Heart left ventricle (tissue), 16 donors: ENCODE measurements at regions of chr5 and their contacts with region 1.

Region 1: DNA sequence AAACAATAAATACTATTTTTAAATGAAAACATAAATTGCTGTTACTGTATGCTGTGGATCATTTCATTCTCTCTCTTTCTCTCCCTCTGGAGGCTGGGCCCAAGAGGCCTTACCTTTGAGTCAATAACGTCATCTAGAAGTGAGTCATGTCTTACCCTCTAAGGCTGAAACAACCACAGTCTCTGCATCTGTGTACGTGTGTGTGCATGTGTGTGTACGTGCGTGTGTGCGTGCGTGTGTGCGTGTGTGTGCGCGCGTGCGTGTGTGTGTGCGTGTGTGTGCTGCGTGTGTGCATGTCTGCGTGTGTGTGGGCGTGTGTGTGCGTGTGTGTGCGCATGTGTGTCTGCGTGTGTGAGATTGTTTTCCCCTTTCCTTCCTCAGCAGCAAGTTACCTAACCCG is 13.6 kb upstream of the IL17B start:
- DNase-seq: no peak
- ATAC-seq: no peak
- H3K4me3 ChIP-seq: no peak overlapping the region
- H3K27ac ChIP-seq: peak overlapping the region in 1 of 12 donors; percentile 93
- H3K4me1 ChIP-seq: peaks cover 0 to 36% (median 20%) of the 10 kb centered on the region in 12 donors
- H3K27me3 ChIP-seq: no peaks in the 10 kb centered on the region
- CTCF ChIP-seq: no peak
- POLR2A ChIP-seq: no peak

Region 2: GRCh38 chr5:149172261-149172660 is 220.5 kb before region 1 on chr5:
- intact Hi-C with region 1: no loop called
- DNase-seq: no peak
- ATAC-seq: no peak
- H3K4me3 ChIP-seq: no peak overlapping the region
- H3K27ac ChIP-seq: peak overlapping the region; percentile 8 to 90 (median 82)
- H3K4me1 ChIP-seq: peaks cover 9 to 85% (median 55%) of the 10 kb centered on the region in 12 donors
- H3K27me3 ChIP-seq: no peaks in the 10 kb centered on the region
- CTCF ChIP-seq: no peak
- POLR2A ChIP-seq: no peak

Region 3: DNA sequence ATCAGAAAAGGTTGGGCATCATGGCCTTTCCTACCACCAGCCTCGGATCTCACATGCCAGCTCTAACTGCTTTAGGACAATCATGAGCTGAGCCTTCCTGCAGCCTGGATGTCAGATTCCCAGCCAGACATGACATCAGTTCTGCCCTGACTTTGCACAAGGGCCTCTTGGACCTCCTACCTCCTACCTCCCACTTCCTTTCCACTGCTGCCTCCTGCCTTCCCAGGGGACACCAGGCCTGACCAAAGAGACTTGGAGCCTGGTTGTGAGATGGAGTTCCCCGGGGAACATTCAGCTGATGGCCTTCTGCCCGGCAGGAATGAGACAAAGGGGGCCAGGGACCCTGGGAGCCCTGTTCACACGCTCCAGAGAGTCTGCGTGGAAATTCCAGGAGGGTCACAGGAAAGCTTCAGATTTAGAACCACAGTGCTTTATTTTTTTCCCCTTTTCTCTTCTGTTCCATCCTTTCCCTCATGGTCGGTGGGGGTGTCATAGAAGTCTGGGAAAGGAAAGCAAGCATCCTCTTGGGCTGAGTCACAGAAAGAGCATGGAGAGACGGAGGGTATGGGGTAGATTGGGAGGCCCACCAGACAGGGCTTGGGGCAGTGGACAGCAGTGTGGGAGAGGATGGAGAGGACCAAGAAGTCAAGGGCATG is 21.8 kb after region 1 on chr5:
- intact Hi-C with region 1: loop called in 1 of 10 experiments (anchors 1 kb)
- DNase-seq: peak; percentile 79 to 89 (median 83)
- ATAC-seq: peak; percentile 5 to 79 (median 67)
- H3K4me3 ChIP-seq: peak overlapping the region in 6 of 12 donors; percentile 2 to 72 (median 66)
- H3K27ac ChIP-seq: peak overlapping the region; percentile 34 to 97 (median 92)
- H3K4me1 ChIP-seq: peaks cover 2 to 70% (median 47%) of the 10 kb centered on the region in 12 donors
- H3K27me3 ChIP-seq: no peaks in the 10 kb centered on the region
- CTCF ChIP-seq: peak in 1 of 12 donors; percentile 9
- POLR2A ChIP-seq: no peak